CD4-positive, alpha-beta T cell (primary cell): ENCODE measurements at regions of chrX and their contacts with region 1.

Region 1: GRCh38 chrX:77899081-77899828 is at the start of gene COX7B:
- DNase-seq: peak; percentile 18 to 95 (median 47)
- ATAC-seq: peak; percentile 62
- H3K4me3 ChIP-seq: peak within 1 kb of the TSS; percentile 77
- H3K4me3 Mint-ChIP-seq: peak within 1 kb of the TSS; percentile 95
- H3K27ac ChIP-seq: peak within 1 kb of the TSS; percentile 80 to 82
- H3K27ac Mint-ChIP-seq: peak within 1 kb of the TSS; percentile 99
- H3K4me1 ChIP-seq: peaks cover 17% of the 10 kb centered on the region
- H3K4me1 Mint-ChIP-seq: peaks cover 37% of the 10 kb centered on the region
- H3K27me3 ChIP-seq: no peaks in the 10 kb centered on the region
- H3K27me3 Mint-ChIP-seq: no peaks in the 10 kb centered on the region
- CTCF ChIP-seq: peak; percentile 48
- total RNA-seq, gene COX7B: 106 to 117 TPM

Region 2: DNA sequence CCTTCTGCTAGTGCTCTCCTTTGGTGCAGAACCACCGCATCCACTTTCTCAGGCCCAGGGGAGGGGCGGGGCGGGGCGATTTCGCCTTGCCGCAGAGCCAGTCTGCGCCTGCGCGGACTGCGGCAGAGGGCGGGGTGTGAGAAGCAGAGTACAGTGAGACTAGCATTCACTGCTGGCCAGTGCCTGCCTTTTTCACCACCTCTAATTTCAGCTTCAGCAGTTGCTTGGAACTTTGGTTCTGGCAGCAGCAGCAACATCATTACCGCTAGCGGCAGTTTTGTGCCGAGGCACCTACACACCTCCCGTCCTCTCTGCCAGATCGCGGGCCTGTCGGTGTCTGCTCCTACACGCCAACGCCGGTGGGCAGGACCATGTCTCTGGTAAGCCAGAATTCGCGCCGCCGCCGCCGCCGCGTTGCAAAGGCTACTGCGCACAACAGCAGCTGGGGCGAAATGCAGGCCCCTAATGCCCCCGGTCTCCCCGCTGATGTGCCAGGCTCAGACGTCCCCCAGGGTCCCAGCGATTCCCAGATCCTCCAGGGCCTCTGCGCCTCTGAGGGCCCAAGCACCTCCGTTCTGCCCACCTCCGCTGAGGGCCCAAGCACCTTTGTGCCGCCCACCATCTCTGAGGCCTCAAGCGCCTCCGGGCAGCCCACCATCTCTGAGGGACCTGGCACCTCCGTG is 1471.6 kb before region 1 on chrX and contains the start of gene MAGEE1:
- CTCF ChIA-PET with region 1: no interaction called
- POLR2A ChIA-PET with region 1: no interaction called
- intact Hi-C with region 1: loop called in 1 of 2 experiments (anchors 10 kb)
- DNase-seq: peak; percentile 70 to 90 (median 79)
- ATAC-seq: peak; percentile 79
- H3K4me3 ChIP-seq: peak within 1 kb of the TSS; percentile 90
- H3K4me3 Mint-ChIP-seq: peak within 1 kb of the TSS; percentile 97
- H3K27ac ChIP-seq: peak within 1 kb of the TSS; percentile 53 to 60
- H3K27ac Mint-ChIP-seq: peak within 1 kb of the TSS; percentile 94
- H3K4me1 ChIP-seq: peaks cover 30% of the 10 kb centered on the region
- H3K4me1 Mint-ChIP-seq: peaks cover 42% of the 10 kb centered on the region
- H3K27me3 ChIP-seq: no peaks in the 10 kb centered on the region
- H3K27me3 Mint-ChIP-seq: no peaks in the 10 kb centered on the region
- CTCF ChIP-seq: no peak
- total RNA-seq, gene MAGEE1: 12.4 to 12.7 TPM

Region 3: GRCh38 chrX:77793950-77794349 is 105.3 kb before region 1 on chrX:
- CTCF ChIA-PET with region 1: no interaction called
- POLR2A ChIA-PET with region 1: interaction called, 17 read pairs
- intact Hi-C with region 1: loop called (anchors 5 kb)
- DNase-seq: no peak
- ATAC-seq: no peak
- H3K4me3 ChIP-seq: no peak overlapping the region
- H3K4me3 Mint-ChIP-seq: no peak overlapping the region
- H3K27ac ChIP-seq: no peak overlapping the region
- H3K27ac Mint-ChIP-seq: no peak overlapping the region
- H3K4me1 ChIP-seq: peaks cover under 1% of the 10 kb centered on the region
- H3K4me1 Mint-ChIP-seq: no peaks in the 10 kb centered on the region
- H3K27me3 ChIP-seq: no peaks in the 10 kb centered on the region
- H3K27me3 Mint-ChIP-seq: no peaks in the 10 kb centered on the region
- CTCF ChIP-seq: no peak

Region 4: GRCh38 chrX:78024349-78025108 is 125.3 kb after region 1 on chrX:
- CTCF ChIA-PET with region 1: interaction called, 17 read pairs
- POLR2A ChIA-PET with region 1: interaction called, 11 read pairs
- intact Hi-C with region 1: no loop called
- DNase-seq: peak in 9 of 14 experiments; percentile 0 to 71 (median 13)
- ATAC-seq: peak; percentile 94
- H3K4me3 ChIP-seq: no peak overlapping the region
- H3K4me3 Mint-ChIP-seq: no peak overlapping the region
- H3K27ac ChIP-seq: no peak overlapping the region
- H3K27ac Mint-ChIP-seq: no peak overlapping the region
- H3K4me1 ChIP-seq: no peaks in the 10 kb centered on the region
- H3K4me1 Mint-ChIP-seq: peaks cover 3% of the 10 kb centered on the region
- H3K27me3 ChIP-seq: no peaks in the 10 kb centered on the region
- H3K27me3 Mint-ChIP-seq: no peaks in the 10 kb centered on the region
- CTCF ChIP-seq: peak; percentile 68

Region 5: DNA sequence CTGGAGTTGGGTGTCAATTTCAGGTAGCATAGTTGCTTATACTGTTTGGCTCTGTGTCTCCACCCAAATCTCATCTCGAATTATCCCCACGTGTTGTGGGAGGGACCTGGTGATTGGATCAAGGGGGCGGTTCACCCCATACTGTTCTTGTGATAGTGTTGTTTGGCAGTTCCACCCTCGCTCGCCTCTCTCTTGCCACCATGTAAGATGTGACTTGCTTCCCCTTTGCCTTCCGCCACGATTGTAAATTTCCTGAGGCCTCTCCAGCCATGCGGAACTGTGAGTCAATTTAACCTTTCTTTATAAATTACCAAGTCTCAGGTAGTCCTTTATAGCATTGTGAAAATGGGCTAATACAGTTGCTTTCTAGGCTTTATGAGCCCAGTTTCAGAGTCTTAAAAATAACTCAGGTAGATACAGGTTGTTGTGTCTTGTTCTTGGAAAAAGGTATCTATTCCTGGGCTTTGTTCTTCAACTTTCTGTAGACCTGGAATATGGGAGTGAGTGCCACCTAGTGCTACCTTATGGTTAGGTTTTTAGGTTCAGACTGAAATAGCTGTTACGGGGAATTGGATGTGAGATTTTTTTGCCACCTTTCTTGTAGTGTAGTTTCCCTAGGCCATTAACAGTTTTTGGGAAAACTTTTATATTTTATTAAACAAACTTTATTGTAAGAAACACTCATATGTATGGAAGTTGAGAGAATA is 220.4 kb after region 1 on chrX:
- CTCF ChIA-PET with region 1: no interaction called
- POLR2A ChIA-PET with region 1: no interaction called
- intact Hi-C with region 1: loop called in 1 of 2 experiments (anchors 5 kb)
- DNase-seq: peak in 1 of 14 experiments; percentile 22
- ATAC-seq: peak; percentile 48
- H3K4me3 ChIP-seq: no peak overlapping the region
- H3K4me3 Mint-ChIP-seq: no peak overlapping the region
- H3K27ac ChIP-seq: no peak overlapping the region
- H3K27ac Mint-ChIP-seq: peak overlapping the region; percentile 56
- H3K4me1 ChIP-seq: peaks cover 15% of the 10 kb centered on the region
- H3K4me1 Mint-ChIP-seq: peaks cover 75% of the 10 kb centered on the region
- H3K27me3 ChIP-seq: no peaks in the 10 kb centered on the region
- H3K27me3 Mint-ChIP-seq: no peaks in the 10 kb centered on the region
- CTCF ChIP-seq: no peak

Region 6: GRCh38 chrX:78945186-78945912 is 1046.1 kb after region 1 on chrX and contains the start of gene P2RY10:
- CTCF ChIA-PET with region 1: no interaction called
- POLR2A ChIA-PET with region 1: no interaction called
- intact Hi-C with region 1: loop called in 1 of 2 experiments (anchors 10 kb)
- DNase-seq: peak in 12 of 14 experiments; percentile 7 to 85 (median 29)
- ATAC-seq: peak; percentile 87
- H3K4me3 ChIP-seq: peak within 1 kb of the TSS; percentile 77
- H3K4me3 Mint-ChIP-seq: peak within 1 kb of the TSS; percentile 93
- H3K27ac ChIP-seq: peak within 1 kb of the TSS; percentile 68 to 83
- H3K27ac Mint-ChIP-seq: peak within 1 kb of the TSS; percentile 96
- H3K4me1 ChIP-seq: peaks cover 7% of the 10 kb centered on the region
- H3K4me1 Mint-ChIP-seq: peaks cover 73% of the 10 kb centered on the region
- H3K27me3 ChIP-seq: no peaks in the 10 kb centered on the region
- H3K27me3 Mint-ChIP-seq: no peaks in the 10 kb centered on the region
- CTCF ChIP-seq: no peak
- total RNA-seq, gene P2RY10: 85.3 to 98.5 TPM